A549 (cell line): ENCODE measurements at regions of chr1 and their contacts with region 1.

Region 1: GRCh38 chr1:150578965-150579798 is at the start of gene MCL1:
- DNase-seq: peak; percentile 84 to 96
- ATAC-seq: peak; percentile 90 to 94
- H3K4me3 ChIP-seq: peak within 1 kb of the TSS; percentile 91
- H3K27ac ChIP-seq: peak within 1 kb of the TSS; percentile 98
- H3K4me1 ChIP-seq: peaks cover 31% of the 10 kb centered on the region
- CTCF ChIP-seq: no peak
- EP300 ChIP-seq: peak in 1 of 2 experiments; percentile 9; a peak in 1 of 5 replicates
- POLR2A ChIP-seq: peak; percentile 87
- RAD21 ChIP-seq: no peak; a peak in 1 of 5 replicates
- polyA plus RNA-seq, gene MCL1: 145 and 202 TPM in 2 replicates

Region 2: GRCh38 chr1:150548632-150549495 is 30.3 kb before region 1 on chr1 and contains the start of gene ADAMTSL4:
- CTCF ChIA-PET with region 1: no interaction called
- POLR2A ChIA-PET with region 1: interaction called, 10 read pairs
- DNase-seq: peak; percentile 80
- ATAC-seq: peak; percentile 74 to 82
- H3K4me3 ChIP-seq: peak within 1 kb of the TSS; percentile 53
- H3K27ac ChIP-seq: peak within 1 kb of the TSS; percentile 75 to 92
- H3K4me1 ChIP-seq: peaks cover 17% of the 10 kb centered on the region
- CTCF ChIP-seq: no peak; the same call in 2 of the 3 replicates
- EP300 ChIP-seq: no peak
- POLR2A ChIP-seq: peak; percentile 36
- RAD21 ChIP-seq: no peak
- polyA plus RNA-seq, gene ADAMTSL4: 1.3 and 1.8 TPM in 2 replicates

Region 3: DNA sequence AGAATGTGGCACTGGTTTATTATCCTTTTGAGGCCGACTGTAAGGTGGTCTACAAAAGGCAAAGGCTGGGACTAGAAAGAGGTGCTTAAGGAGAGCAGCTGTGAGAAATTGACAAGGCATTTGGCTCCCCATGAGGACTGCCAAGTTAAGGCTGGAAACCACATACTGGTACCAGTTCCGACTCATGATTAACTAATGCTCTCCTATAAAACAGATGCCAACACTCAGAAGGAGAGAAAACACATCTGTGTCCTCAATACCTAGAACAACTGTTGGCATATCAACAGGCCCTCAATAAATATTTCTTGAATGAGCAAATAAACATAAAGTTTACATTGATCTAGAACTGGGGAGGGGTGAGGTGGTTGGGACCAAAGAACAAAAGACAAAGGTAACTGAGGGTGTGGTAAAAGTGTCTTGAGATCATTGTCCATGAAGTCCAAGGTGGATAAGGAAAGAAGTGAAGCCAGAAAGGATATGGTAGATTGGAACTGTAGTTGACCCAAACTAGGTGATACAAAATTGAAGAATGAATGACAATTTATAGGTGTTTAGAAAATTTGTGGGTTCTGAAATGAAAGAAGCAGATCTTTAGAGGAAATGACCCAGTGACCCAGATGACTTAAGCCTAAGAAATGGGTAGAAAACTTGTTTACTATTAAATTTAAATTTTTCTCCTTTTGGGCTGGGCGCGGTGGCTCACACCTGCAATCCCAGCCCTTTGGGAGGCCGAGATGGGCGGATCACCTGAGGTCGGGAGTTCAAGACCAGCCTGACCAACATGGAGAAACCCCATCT is 17.1 kb after region 1 on chr1:
- CTCF ChIA-PET with region 1: interaction called, 7 read pairs
- POLR2A ChIA-PET with region 1: interaction called, 10 read pairs
- DNase-seq: no peak
- ATAC-seq: peak; percentile 39 to 53; a peak in 3 of 6 replicates
- H3K4me3 ChIP-seq: no peak overlapping the region
- H3K27ac ChIP-seq: peak overlapping the region; percentile 7 to 64; a peak in 4 of 6 replicates
- H3K4me1 ChIP-seq: peaks cover 23% of the 10 kb centered on the region
- CTCF ChIP-seq: no peak
- EP300 ChIP-seq: no peak
- POLR2A ChIP-seq: no peak
- RAD21 ChIP-seq: no peak

Region 4: GRCh38 chr1:150613061-150613920 is 34.1 kb after region 1 on chr1:
- CTCF ChIA-PET with region 1: interaction called, 13 read pairs
- POLR2A ChIA-PET with region 1: interaction called, 43 read pairs
- DNase-seq: peak; percentile 66 to 90
- ATAC-seq: peak; percentile 63 to 65
- H3K4me3 ChIP-seq: peak overlapping the region; percentile 13; the same call in 1 of the 3 replicates
- H3K27ac ChIP-seq: peak overlapping the region; percentile 89 to 95
- H3K4me1 ChIP-seq: peaks cover 60% of the 10 kb centered on the region
- CTCF ChIP-seq: no peak
- EP300 ChIP-seq: peak; percentile 66; a peak in 2 of 5 replicates
- POLR2A ChIP-seq: no peak
- RAD21 ChIP-seq: no peak

Region 5: DNA sequence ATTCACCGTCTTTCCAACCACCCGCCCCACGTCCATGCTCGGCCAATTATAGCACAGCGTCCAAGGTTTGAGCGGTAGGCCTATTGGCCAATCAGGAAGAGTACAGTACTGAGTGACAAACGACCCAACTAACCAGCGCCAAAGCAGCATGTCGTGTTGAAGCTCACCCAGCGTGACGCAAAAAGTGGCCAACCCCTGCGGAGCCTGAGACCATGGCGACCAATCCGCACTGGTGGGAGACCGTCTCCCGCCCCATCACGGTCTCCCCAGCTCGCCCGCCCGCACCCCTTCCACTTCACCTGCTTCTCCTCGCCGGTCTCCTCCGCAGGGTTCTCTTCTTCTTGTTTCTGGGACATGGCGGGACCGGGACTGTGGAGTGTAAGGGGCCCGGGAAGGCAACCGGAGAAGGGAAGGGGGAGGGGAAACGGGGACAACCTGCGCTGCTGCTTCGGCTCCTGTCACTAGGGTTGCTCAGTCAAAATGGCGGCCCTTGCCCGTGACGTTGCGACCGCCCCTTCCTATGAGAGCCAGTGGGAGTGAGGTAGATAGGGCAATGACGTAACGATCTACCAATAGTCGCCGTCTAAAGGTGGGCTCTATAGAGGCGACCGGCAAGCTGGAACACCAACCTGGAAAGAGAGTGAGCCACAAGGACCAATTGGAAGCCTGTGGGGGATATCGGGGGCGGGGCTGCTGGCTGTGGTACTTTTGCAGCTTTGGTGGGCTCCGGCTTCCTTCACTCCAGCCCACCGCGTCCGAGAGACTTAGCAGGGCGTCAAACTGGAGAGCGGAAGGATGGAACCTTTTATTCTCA is 50.1 kb after region 1 on chr1 and contains the start of gene ENSA:
- CTCF ChIA-PET with region 1: interaction called, 3 read pairs
- POLR2A ChIA-PET with region 1: interaction called, 53 read pairs
- DNase-seq: peak; percentile 99
- ATAC-seq: peak; percentile 96 to 97
- H3K4me3 ChIP-seq: peak within 1 kb of the TSS; percentile 62
- H3K27ac ChIP-seq: peak within 1 kb of the TSS; percentile 85 to 95
- H3K4me1 ChIP-seq: peaks cover 13% of the 10 kb centered on the region; the same call in 2 of the 3 replicates
- CTCF ChIP-seq: no peak
- EP300 ChIP-seq: no peak
- POLR2A ChIP-seq: peak; percentile 58
- RAD21 ChIP-seq: no peak
- polyA plus RNA-seq, gene ENSA: 61.2 and 67.9 TPM in 2 replicates

Region 6: DNA sequence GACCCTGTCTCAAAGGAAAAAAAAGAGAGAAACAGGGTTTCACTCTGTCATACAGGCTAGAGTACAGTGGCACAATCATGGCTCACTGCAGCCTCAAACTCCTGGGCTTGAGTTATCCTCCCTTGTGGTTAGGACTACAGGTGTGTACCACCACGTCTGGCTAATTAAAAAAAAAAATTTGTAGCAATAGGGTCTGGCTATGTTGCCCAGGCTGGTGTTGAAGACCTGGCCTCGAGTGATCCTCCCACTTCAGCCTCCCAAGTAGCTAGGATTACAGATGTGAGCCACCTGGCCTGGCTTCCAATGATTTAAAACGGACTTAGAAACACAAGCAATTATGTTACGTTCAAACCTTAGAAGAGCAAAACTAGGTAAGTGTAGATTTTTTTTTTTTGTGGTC is 95.7 kb after region 1 on chr1:
- CTCF ChIA-PET with region 1: no interaction called
- POLR2A ChIA-PET with region 1: no interaction called
- DNase-seq: no peak
- ATAC-seq: no peak
- H3K4me3 ChIP-seq: no peak overlapping the region
- H3K27ac ChIP-seq: no peak overlapping the region
- H3K4me1 ChIP-seq: no peaks in the 10 kb centered on the region
- CTCF ChIP-seq: no peak
- EP300 ChIP-seq: no peak
- POLR2A ChIP-seq: no peak
- RAD21 ChIP-seq: no peak

Region 7: DNA sequence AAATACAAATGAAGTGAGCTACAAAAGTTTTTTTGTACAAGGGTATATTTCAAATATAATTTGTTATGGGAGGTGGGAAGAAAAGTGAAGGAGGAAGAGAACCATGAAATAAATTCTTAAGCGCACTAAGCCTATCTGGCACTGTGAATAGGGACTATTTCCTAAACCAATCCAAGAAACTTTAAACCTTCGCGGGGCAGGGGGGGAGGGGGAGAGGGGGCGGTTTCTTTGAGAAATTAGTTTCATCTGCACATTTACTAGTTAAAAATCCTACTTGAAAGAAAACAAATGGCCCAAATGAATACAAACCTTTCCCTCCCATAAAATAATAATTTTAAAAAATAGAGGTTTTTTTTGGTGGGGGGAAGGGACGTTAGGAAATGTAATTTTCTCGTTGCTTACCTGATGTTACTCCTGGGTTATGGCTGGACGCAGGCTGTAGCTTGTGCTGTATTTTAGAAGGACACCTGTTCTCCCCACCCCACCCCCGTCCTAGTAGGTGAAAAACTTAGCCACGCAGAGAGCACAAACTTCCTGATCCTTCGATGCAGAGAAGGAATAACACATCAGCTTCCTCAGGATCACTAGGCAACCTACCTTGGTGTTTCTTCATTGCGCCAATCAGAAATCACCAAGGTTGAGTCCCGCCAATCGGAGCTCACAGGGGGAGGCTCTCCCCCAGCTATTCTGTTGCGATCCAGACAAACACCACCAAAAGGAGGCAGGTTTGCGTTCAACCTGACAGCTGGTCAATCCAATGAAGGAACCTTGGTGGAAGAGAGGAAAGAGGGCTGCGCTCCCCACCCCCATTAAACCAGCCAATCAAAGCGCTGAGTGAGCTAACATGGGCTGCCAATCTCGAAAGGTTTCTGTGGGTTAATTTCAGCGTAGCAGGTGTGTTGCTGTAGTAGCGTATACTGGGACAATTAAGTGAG is 117.7 kb after region 1 on chr1 and contains the start of gene GOLPH3L:
- CTCF ChIA-PET with region 1: no interaction called
- POLR2A ChIA-PET with region 1: interaction called, 14 read pairs
- DNase-seq: peak; percentile 92 to 98
- ATAC-seq: peak; percentile 100
- H3K4me3 ChIP-seq: peak within 1 kb of the TSS; percentile 66
- H3K27ac ChIP-seq: peak within 1 kb of the TSS; percentile 75 to 88
- H3K4me1 ChIP-seq: peaks cover 13% of the 10 kb centered on the region; the same call in 2 of the 3 replicates
- CTCF ChIP-seq: no peak
- EP300 ChIP-seq: no peak
- POLR2A ChIP-seq: 0 out of 2 replicates have a peak, but pooled peaks have one; percentile 40
- RAD21 ChIP-seq: no peak
- polyA plus RNA-seq, gene GOLPH3L: 34.9 and 41.8 TPM in 2 replicates